ENCODE measurements at regions of chr7 and their contacts with region 1.

Region 1: GRCh38 chr7:42911454-42912447 is at the start of gene C7orf25:
- DNase-seq: peak; percentile 96
- ATAC-seq: peak; percentile 96
- H3K4me3 Mint-ChIP-seq: peak within 1 kb of the TSS; percentile 93
- H3K27ac Mint-ChIP-seq: peak within 1 kb of the TSS; percentile 92
- H3K4me1 Mint-ChIP-seq: peaks cover 66% of the 10 kb centered on the region
- H3K27me3 Mint-ChIP-seq: no peaks in the 10 kb centered on the region
- total RNA-seq, gene C7orf25: 6.0 to 7.2 TPM

Region 2: DNA sequence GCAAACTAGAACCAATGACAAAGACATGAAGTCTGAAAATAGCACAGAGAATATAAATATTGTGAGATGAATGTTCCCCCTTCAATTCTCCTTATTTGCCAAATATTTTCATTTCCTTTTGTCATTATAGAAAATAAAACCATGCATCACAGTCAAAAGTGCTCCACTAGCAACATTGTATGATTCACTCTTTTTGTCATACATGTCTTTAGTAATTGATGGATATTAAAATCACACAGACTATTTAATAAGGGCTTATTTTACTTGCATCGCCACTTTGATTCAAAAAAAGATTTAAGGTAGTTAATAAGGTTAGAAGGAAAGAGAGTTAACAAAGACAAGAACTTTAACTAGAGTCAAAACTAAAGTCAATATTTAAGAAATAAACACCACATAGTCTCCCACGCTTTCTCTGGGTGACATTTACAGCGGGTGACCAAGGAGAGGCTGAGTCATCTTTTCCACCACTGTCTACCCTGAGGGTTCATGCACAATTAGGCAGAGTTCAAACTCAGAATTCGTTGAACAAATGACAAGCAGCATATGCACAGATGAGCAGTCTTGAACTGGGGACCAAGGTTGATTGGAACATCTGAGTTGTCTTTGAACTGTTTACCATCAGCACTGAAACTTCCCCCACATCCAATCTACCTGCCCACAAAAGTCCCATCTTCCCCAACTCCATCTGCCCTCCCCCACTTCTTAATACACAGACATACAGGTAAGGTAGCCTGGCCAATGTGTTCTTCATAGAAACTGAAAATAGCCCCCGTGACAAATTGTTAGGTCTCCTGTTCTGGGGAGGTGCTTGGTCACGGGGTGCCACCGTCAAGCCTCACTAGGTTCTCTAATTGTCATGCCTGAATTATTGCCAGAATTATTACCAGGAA is 42.4 kb before region 1 on chr7:
- CTCF ChIA-PET with region 1: no interaction called
- POLR2A ChIA-PET with region 1: no interaction called
- DNase-seq: peak; percentile 30
- ATAC-seq: peak; percentile 58
- H3K4me3 Mint-ChIP-seq: no peak overlapping the region
- H3K27ac Mint-ChIP-seq: no peak overlapping the region
- H3K4me1 Mint-ChIP-seq: peaks cover 10% of the 10 kb centered on the region
- H3K27me3 Mint-ChIP-seq: no peaks in the 10 kb centered on the region

Region 3: GRCh38 chr7:42931834-42932651 is 20.3 kb after region 1 on chr7 and contains the starts of genes MRPL32 and PSMA2:
- CTCF ChIA-PET with region 1: interaction called, 9 read pairs
- POLR2A ChIA-PET with region 1: interaction called, 20 read pairs
- DNase-seq: peak; percentile 97
- ATAC-seq: peak; percentile 100
- H3K4me3 Mint-ChIP-seq: peak within 1 kb of the TSS; percentile 100
- H3K27ac Mint-ChIP-seq: peak within 1 kb of the TSS; percentile 98
- H3K4me1 Mint-ChIP-seq: peaks cover 59% of the 10 kb centered on the region
- H3K27me3 Mint-ChIP-seq: no peaks in the 10 kb centered on the region
- total RNA-seq, gene MRPL32: 38.7 to 41.6 TPM
- total RNA-seq, gene PSMA2: 131 to 154 TPM